ENCODE measurements at regions of chr10 and their contacts with region 1.

Region 1: DNA sequence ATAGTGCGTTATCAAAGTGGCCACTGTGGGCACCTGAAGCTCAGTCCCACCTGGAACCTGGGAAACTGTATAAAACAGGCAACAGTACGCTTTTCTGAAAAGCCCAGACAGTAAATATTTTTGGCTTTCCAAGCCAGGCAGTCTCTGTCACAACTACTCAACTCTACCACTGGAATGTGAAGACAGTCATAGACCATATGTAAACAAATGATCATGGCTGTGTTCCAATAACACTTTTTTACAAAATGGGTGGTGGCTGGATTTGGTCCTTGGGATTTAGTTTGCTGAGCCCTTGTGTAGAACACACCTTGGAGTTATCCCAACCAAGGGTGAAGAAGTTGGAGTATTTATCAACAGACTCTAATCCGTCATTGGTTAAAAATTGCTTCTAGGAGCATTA is 259.9 kb downstream of the SKIDA1 start:
- DNase-seq: no peak
- CTCF ChIP-seq: no peak

Region 2: DNA sequence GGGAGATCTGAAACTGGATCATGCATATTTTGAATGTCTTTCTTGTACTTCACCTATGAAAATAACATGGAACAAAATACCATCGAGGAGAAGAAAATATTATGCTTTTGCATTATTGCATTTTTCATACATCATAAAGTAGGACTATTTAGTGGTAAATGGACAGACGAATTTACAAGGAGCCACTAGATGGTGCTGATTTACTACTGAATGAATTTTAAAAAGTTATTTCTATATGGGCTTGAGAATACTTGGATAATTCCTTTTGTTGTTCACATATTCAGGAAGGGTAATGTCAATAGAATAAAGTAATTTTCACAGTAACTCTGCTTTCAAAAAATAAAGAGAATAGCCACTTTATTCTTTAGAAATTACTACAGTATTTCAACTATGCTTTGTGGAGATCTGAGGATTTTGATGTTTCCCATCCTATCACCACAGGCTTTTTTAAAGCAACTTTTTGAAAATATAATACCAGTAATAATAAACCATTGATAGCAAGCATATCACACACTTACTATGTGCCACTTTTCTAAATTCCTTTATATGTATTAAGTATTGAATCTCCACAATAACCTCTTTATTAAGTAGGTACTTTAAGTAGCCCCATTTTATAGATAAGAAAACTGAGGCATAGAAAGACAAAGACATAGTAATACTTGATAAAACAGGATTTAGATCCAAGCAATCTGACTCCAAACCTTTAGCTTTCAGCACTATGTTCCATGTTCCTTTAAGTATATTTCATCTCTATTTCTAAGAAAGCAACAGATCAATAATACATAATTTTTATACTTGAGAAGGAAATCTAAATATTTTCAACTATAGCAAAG is 407.1 kb before region 1 on chr10:
- in situ Hi-C with region 1: loop called (anchors 25 kb)
- DNase-seq: no peak
- CTCF ChIP-seq: peak; percentile 7

Measured in GM13976 (cell line).